K562 (cell line): ENCODE measurements at regions of chr4 and their contacts with region 1.

Region 1: DNA sequence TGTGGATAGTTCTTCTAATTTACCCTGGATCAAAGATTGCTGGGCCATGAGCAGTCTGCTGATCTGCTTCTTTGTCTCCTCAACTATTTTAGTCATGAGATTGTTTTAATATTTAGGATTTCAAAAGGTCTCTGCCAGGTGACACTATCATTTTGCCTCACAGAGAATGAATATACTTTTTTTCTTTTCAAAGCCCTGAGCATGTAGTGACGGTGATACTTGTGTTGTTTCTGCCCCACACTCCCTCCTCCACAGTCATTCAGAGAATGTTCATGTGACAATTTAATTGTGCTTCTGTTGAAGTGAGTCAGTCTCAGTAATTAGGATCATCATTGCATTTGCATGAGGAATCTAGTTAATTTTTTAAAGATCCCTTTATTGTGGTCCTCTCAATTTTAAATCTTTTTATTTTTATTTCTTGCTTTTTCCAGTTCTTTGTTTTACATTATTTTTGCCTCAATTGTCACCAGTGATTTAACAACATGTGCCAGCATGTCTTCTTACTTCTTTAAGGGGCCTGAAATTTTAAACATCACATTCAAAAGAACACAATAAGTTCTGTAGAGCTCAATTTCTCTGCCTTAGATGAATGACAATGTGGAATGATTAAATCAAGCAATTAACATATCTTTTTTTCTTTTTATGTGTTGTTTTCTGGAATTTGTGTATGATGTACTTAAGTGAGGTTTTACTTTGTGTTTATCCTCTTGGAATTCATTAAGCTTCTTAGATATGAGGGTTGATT is 12.3 kb downstream of the MMRN1 start:
- DNase-seq: no peak
- ATAC-seq: no peak
- H3K4me3 ChIP-seq: no peak overlapping the region
- H3K27ac ChIP-seq: no peak overlapping the region
- H3K4me1 ChIP-seq: no peaks in the 10 kb centered on the region
- H3K27me3 ChIP-seq: no peaks in the 10 kb centered on the region
- CTCF ChIP-seq: no peak
- EP300 ChIP-seq: no peak
- POLR2A ChIP-seq: no peak
- RAD21 ChIP-seq: no peak

Region 2: GRCh38 chr4:88635066-88635465 is 1271.9 kb before region 1 on chr4:
- CTCF ChIA-PET with region 1: no interaction called
- POLR2A ChIA-PET with region 1: no interaction called
- in situ Hi-C with region 1: no loop called
- intact Hi-C with region 1: no loop called
- DNase-seq: no peak
- ATAC-seq: no peak
- H3K4me3 ChIP-seq: no peak overlapping the region
- H3K27ac ChIP-seq: no peak overlapping the region
- H3K4me1 ChIP-seq: no peaks in the 10 kb centered on the region
- H3K27me3 ChIP-seq: no peaks in the 10 kb centered on the region
- CTCF ChIP-seq: no peak
- EP300 ChIP-seq: no peak
- POLR2A ChIP-seq: no peak
- RAD21 ChIP-seq: no peak

Region 3: GRCh38 chr4:89158884-89159503 is 748.0 kb before region 1 on chr4:
- CTCF ChIA-PET with region 1: no interaction called
- POLR2A ChIA-PET with region 1: no interaction called
- in situ Hi-C with region 1: no loop called
- intact Hi-C with region 1: loop called (anchors 5 kb)
- DNase-seq: peak; percentile 22 to 32 (median 24)
- ATAC-seq: peak; percentile 67; the same call in 2 of the 3 replicates
- H3K4me3 ChIP-seq: no peak overlapping the region
- H3K27ac ChIP-seq: no peak overlapping the region
- H3K4me1 ChIP-seq: no peaks in the 10 kb centered on the region
- H3K27me3 ChIP-seq: no peaks in the 10 kb centered on the region
- CTCF ChIP-seq: peak; percentile 35 to 78 (median 56); a peak in 5 of 6 replicates
- EP300 ChIP-seq: no peak
- POLR2A ChIP-seq: no peak
- RAD21 ChIP-seq: peak; percentile 76 to 78

Region 4: GRCh38 chr4:89434364-89434988 is 472.5 kb before region 1 on chr4:
- CTCF ChIA-PET with region 1: no interaction called
- POLR2A ChIA-PET with region 1: no interaction called
- in situ Hi-C with region 1: no loop called
- intact Hi-C with region 1: loop called (anchors 10 kb)
- DNase-seq: peak in 1 of 4 experiments; percentile 5
- ATAC-seq: no peak; the same call in 2 of the 3 replicates
- H3K4me3 ChIP-seq: no peak overlapping the region
- H3K27ac ChIP-seq: no peak overlapping the region
- H3K4me1 ChIP-seq: no peaks in the 10 kb centered on the region
- H3K27me3 ChIP-seq: no peaks in the 10 kb centered on the region
- CTCF ChIP-seq: peak in 2 of 3 experiments; percentile 26 to 51; a peak in 2 of 6 replicates
- EP300 ChIP-seq: no peak
- POLR2A ChIP-seq: no peak
- RAD21 ChIP-seq: peak; percentile 67 to 74

Region 5: GRCh38 chr4:89640620-89641366 is 266.2 kb before region 1 on chr4:
- CTCF ChIA-PET with region 1: interaction called, 3 read pairs
- POLR2A ChIA-PET with region 1: no interaction called
- in situ Hi-C with region 1: no loop called
- intact Hi-C with region 1: loop called (anchors 5 kb)
- DNase-seq: peak in 3 of 4 experiments; percentile 6 to 44 (median 23)
- ATAC-seq: peak; percentile 89
- H3K4me3 ChIP-seq: no peak overlapping the region
- H3K27ac ChIP-seq: no peak overlapping the region
- H3K4me1 ChIP-seq: no peaks in the 10 kb centered on the region
- H3K27me3 ChIP-seq: no peaks in the 10 kb centered on the region
- CTCF ChIP-seq: peak; percentile 35 to 45 (median 40); a peak in 4 of 6 replicates
- EP300 ChIP-seq: no peak
- POLR2A ChIP-seq: no peak
- RAD21 ChIP-seq: no peak

Region 6: DNA sequence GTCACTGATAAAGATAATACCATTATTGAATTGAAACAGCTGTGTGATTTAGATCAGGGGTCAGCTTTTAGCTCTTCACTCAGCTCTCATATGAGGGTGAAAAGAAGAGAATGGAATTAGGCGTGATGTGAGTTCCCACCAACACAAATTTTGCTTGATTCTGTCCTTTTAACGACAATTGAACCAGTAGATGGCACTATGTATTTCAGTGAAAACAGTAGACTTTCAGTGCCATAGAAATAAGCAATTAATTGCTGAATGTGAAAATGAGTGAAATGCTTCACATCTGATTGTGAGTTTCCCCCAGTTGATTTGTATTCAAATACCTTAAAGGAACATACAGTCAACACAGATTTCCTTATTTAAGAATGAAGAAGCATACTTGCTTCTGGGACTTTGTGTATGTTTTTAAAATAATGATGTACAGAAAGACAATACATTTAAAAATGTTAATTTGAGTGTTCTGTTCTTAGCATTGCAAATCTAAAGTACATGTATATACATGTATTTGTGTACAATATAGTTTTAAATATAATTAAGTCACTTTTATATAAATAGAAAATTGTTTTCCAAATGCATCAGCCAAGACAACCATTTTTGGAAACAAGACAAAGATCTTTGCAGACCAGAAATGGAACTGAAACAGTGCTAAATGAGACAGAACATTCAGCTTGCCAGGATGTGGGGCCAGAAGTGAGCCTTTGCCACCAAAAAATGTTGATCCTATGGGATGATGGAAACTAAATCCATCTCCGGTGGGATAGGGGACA is 248.8 kb before region 1 on chr4:
- CTCF ChIA-PET with region 1: no interaction called
- POLR2A ChIA-PET with region 1: no interaction called
- in situ Hi-C with region 1: no loop called
- intact Hi-C with region 1: loop called (anchors 5 kb)
- DNase-seq: peak in 1 of 4 experiments; percentile 4
- ATAC-seq: no peak
- H3K4me3 ChIP-seq: no peak overlapping the region
- H3K27ac ChIP-seq: no peak overlapping the region
- H3K4me1 ChIP-seq: no peaks in the 10 kb centered on the region
- H3K27me3 ChIP-seq: no peaks in the 10 kb centered on the region
- CTCF ChIP-seq: peak in 1 of 3 experiments; percentile 9; a peak in 2 of 6 replicates
- EP300 ChIP-seq: no peak
- POLR2A ChIP-seq: no peak
- RAD21 ChIP-seq: peak in 1 of 2 experiments; percentile 9; a peak in 1 of 4 replicates